ENCODE measurements at regions of chr5 and their contacts with region 1.

Region 1: DNA sequence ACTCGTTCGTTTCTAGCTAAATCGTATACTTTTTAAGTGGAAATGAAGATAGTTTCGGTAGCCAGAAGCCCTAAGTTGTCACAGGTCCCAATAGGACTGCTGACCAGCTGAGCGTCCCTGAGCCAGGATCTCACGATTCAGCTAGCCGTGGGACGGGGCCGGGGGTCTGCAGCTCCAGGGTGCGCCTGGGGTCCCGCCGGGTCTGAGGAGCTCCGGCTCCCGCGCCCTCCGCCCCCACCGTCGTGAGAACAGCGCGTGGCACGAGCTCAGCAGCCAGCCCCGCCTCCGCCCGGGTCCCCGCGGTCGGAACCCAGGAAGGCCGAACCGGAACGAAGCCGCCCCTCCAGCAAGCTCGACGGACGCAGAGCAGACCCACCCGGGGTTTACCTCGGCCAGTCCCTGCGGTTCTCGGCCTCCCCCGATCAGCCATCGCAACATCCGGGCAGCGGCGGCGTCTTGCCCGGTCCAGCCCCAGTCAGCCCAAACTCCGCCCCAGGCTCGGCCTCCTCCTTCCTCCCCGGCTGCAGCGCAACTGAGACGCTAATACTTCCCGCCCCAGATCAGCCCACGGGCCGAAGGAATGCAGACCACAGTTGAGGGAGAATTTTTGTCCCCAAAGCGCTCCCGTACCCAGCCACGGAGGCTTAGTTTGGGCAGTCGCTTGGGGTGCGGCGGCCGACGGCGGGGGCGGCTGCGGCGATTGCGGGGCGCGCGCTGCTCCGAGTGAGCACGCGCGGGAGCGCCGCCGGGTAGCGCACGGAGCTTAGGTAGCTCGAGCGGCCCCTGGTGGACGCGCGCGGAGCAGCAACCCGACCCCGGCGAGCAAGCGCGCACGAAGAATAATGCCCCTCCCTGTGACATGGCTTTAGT is at the start of gene WDR41:
- DNase-seq: peak; percentile 74 to 90 (median 85)
- ATAC-seq: peak; percentile 97
- H3K4me3 ChIP-seq: peak within 1 kb of the TSS; percentile 87
- H3K4me3 Mint-ChIP-seq: peak within 1 kb of the TSS; percentile 84 to 97 (median 90)
- H3K27ac ChIP-seq: peak within 1 kb of the TSS; percentile 82
- H3K27ac Mint-ChIP-seq: peak within 1 kb of the TSS; percentile 67 to 95 (median 88)
- H3K4me1 ChIP-seq: peaks cover 0 to 4% of the 10 kb centered on the region in 2 donors
- H3K4me1 Mint-ChIP-seq: peaks cover 6 to 28% (median 10%) of the 10 kb centered on the region in 7 donors
- H3K27me3 ChIP-seq: no peaks in the 10 kb centered on the region
- H3K27me3 Mint-ChIP-seq: peaks cover 8 to 27% (median 21%) of the 10 kb centered on the region in 5 donors
- total RNA-seq, gene WDR41: 6.0 to 23.8 (median 13.7) TPM

Region 2: DNA sequence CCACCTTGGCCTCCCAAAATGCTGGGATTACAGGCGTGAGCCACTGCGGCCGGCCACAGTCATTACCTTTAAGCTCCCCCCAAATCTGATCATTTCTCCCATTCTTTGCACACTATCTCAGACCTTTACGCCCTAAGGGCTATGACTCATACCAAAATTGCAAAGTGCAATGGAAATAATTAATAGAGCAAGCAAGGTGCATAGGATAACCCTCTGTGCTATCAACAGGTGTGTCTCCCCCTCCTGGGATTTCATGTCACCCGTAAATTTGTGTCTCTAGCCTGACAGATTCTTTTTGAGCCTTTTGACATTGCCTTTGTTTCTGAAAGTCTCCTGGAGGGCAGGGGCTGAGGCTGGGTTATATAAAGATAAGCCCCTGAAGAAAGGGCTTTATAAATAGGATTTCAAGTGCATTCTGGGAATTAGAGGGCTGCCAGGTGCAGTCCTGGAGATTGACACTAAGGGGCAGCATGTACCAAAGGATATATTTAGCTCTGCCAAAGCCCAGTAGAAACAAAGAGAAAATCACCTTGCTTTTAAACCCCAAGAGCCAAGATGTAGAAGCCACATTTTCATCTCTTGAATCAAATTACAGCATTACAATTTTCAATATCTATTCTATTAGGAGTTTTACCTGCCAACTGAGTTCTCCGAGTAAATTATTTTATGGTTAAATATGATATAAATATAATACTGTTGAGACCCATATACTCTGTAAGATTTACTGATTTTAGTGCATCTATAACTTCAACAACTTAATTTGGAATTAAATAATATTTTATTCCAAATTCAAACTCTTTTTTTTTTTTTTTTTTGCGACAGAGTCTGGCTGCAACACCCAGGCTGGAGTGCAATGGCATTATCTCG is 624.0 kb before region 1 on chr5:
- CTCF ChIA-PET with region 1: interaction called, 7 read pairs
- POLR2A ChIA-PET with region 1: no interaction called
- intact Hi-C with region 1: loop called in 1 of 2 experiments (anchors 1 kb)
- DNase-seq: peak; percentile 14 to 63 (median 53)
- ATAC-seq: peak; percentile 90
- H3K4me3 ChIP-seq: no peak overlapping the region
- H3K4me3 Mint-ChIP-seq: no peak overlapping the region
- H3K27ac ChIP-seq: no peak overlapping the region
- H3K27ac Mint-ChIP-seq: no peak overlapping the region
- H3K4me1 ChIP-seq: no peaks in the 10 kb centered on the region
- H3K4me1 Mint-ChIP-seq: peaks cover 0 to 4% (median 0%) of the 10 kb centered on the region in 7 donors
- H3K27me3 ChIP-seq: no peaks in the 10 kb centered on the region
- H3K27me3 Mint-ChIP-seq: no peaks in the 10 kb centered on the region

Region 3: GRCh38 chr5:77086689-77087483 is 405.1 kb before region 1 on chr5 and contains the start of gene ZBED3:
- CTCF ChIA-PET with region 1: no interaction called
- POLR2A ChIA-PET with region 1: no interaction called
- intact Hi-C with region 1: loop called (anchors 1 to 2 kb)
- DNase-seq: peak; percentile 33 to 76 (median 60)
- ATAC-seq: peak; percentile 82
- H3K4me3 ChIP-seq: peak within 1 kb of the TSS; percentile 74
- H3K4me3 Mint-ChIP-seq: peak within 1 kb of the TSS; percentile 85 to 96 (median 93)
- H3K27ac ChIP-seq: peak within 1 kb of the TSS; percentile 62
- H3K27ac Mint-ChIP-seq: peak within 1 kb of the TSS; percentile 59 to 94 (median 86)
- H3K4me1 ChIP-seq: peaks cover 3 to 6% of the 10 kb centered on the region in 2 donors
- H3K4me1 Mint-ChIP-seq: peaks cover 5 to 20% (median 17%) of the 10 kb centered on the region in 7 donors
- H3K27me3 ChIP-seq: no peaks in the 10 kb centered on the region
- H3K27me3 Mint-ChIP-seq: peaks cover 0 to 12% (median 5%) of the 10 kb centered on the region in 5 donors
- total RNA-seq, gene ZBED3: 0.56 to 4.0 (median 2.8) TPM

Region 4: GRCh38 chr5:77210091-77210963 is 281.7 kb before region 1 on chr5 and contains the start of gene PDE8B:
- CTCF ChIA-PET with region 1: no interaction called
- POLR2A ChIA-PET with region 1: no interaction called
- intact Hi-C with region 1: loop called in 1 of 2 experiments (anchors 10 kb)
- DNase-seq: peak in 6 of 9 donors; percentile 26 to 38 (median 31)
- ATAC-seq: peak; percentile 75
- H3K4me3 ChIP-seq: peak within 1 kb of the TSS; percentile 33
- H3K4me3 Mint-ChIP-seq: peak within 1 kb of the TSS; percentile 84 to 90 (median 86)
- H3K27ac ChIP-seq: no peak within 1 kb of the TSS
- H3K27ac Mint-ChIP-seq: peak within 1 kb of the TSS in 5 of 9 donors; percentile 12 to 84 (median 71)
- H3K4me1 ChIP-seq: peaks cover 0 to 8% of the 10 kb centered on the region in 2 donors
- H3K4me1 Mint-ChIP-seq: peaks cover 7 to 23% (median 14%) of the 10 kb centered on the region in 7 donors
- H3K27me3 ChIP-seq: peaks cover 3 to 16% of the 10 kb centered on the region in 2 donors
- H3K27me3 Mint-ChIP-seq: peaks cover 55 to 69% (median 61%) of the 10 kb centered on the region in 5 donors
- total RNA-seq, gene PDE8B: 1.2 TPM in 1 of 5 experiments, not detected in the others

Region 5: GRCh38 chr5:77277759-77278158 is 214.3 kb before region 1 on chr5:
- CTCF ChIA-PET with region 1: no interaction called
- POLR2A ChIA-PET with region 1: no interaction called
- intact Hi-C with region 1: loop called in 1 of 2 experiments (anchors 5 kb)
- DNase-seq: peak in 3 of 9 donors; percentile 4 to 24 (median 20)
- ATAC-seq: no peak
- H3K4me3 ChIP-seq: no peak overlapping the region
- H3K4me3 Mint-ChIP-seq: peak overlapping the region in 6 of 10 donors; percentile 33 to 70 (median 57)
- H3K27ac ChIP-seq: no peak overlapping the region
- H3K27ac Mint-ChIP-seq: peak overlapping the region in 8 of 9 donors; percentile 39 to 92 (median 78)
- H3K4me1 ChIP-seq: peaks cover 0 to 12% of the 10 kb centered on the region in 2 donors
- H3K4me1 Mint-ChIP-seq: peaks cover 0 to 27% (median 21%) of the 10 kb centered on the region in 7 donors
- H3K27me3 ChIP-seq: no peaks in the 10 kb centered on the region
- H3K27me3 Mint-ChIP-seq: peaks cover 0 to 4% (median 0%) of the 10 kb centered on the region in 5 donors

Region 6: GRCh38 chr5:78294248-78295034 is 802.4 kb after region 1 on chr5 and contains the start of gene AP3B1:
- CTCF ChIA-PET with region 1: no interaction called
- POLR2A ChIA-PET with region 1: no interaction called
- intact Hi-C with region 1: loop called (anchors 1 to 5 kb)
- DNase-seq: peak; percentile 94 to 98 (median 96)
- ATAC-seq: peak; percentile 97
- H3K4me3 ChIP-seq: peak within 1 kb of the TSS; percentile 98
- H3K4me3 Mint-ChIP-seq: peak within 1 kb of the TSS; percentile 86 to 100 (median 98)
- H3K27ac ChIP-seq: peak within 1 kb of the TSS; percentile 88
- H3K27ac Mint-ChIP-seq: peak within 1 kb of the TSS; percentile 77 to 99 (median 97)
- H3K4me1 ChIP-seq: peaks cover 5 to 9% of the 10 kb centered on the region in 2 donors
- H3K4me1 Mint-ChIP-seq: peaks cover 27 to 50% (median 46%) of the 10 kb centered on the region in 7 donors
- H3K27me3 ChIP-seq: no peaks in the 10 kb centered on the region
- H3K27me3 Mint-ChIP-seq: peaks cover 0 to 11% (median 0%) of the 10 kb centered on the region in 5 donors
- total RNA-seq, gene AP3B1: 30.2 to 45.0 (median 37.2) TPM

Measured in naive thymus-derived CD4-positive, alpha-beta T cell (primary cell).